ENCODE measurements at regions of chr19 and their contacts with region 1.

Region 1: DNA sequence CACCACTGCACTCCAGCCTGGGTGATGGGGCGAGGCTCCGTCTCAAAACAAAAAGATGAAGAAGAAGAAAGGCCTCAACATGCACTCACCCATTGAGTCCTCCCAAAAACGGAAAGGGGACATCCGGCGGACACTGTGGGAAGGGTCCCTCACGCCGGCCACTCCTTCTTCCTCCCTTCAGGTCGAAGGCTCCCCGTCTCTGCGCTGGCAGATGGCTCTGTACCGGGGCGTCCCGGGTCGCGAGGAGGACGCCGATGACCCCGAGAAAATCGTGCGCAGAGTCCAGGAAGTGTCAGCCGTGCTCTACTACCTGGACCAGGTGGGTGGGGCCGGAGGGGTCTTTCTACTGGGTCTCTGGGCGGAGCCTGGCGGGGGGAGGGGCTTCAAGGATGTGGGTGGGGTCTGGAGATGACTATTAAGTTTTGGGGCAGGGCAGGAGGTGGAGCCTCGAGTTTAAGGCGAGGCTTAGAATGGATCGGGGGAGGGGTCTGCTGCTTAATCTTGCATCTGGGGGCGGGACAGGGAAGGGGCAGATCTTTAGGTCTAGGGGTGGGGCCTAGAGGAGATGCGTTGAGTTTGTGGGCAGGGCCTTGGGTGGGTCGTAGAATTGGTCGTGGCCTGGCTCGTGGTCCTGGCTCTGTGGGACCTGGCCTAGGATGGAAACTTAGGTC is 90.2 kb downstream of the MAP4K1 start:
- DNase-seq: peak in 1 of 6 donors; percentile 46
- ATAC-seq: no peak
- H3K4me3 ChIP-seq: no peak overlapping the region
- H3K27ac ChIP-seq: no peak overlapping the region
- H3K4me1 ChIP-seq: no peaks in the 10 kb centered on the region
- H3K27me3 ChIP-seq: no peaks in the 10 kb centered on the region
- CTCF ChIP-seq: no peak

Region 2: DNA sequence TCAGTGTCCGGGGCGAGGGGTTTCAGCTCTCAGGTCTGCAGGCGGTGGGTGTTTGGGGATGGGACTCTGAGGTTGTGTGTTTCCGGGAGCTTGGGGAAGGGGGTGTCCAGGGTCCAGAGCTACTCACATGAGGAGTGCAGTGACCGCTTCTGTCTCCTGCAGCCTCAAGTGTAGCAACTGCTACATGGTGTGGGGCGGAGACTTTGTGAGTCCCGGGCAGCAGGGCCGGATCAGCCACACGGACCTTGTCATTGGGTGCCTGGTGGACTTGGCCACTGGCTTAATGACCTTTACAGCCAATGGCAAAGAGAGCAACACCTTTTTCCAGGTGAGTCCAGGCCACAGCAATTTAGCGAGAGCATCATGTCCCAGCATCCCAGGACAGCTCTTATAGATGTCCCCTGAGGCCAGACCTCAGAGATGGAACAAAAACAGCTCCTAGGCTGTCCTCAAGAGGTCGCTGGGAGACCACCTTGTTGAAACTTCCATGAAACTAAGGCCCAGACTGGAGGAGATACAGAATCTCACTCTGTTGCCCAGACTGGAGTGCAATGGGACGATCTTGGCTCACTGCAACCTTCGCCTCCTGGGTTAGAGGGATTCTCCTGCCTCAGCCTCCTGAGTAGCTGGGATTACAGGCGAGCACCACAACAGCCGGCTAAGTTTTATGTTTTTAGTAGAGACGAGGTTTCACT is 49.2 kb before region 1 on chr19:
- intact Hi-C with region 1: loop called in 1 of 3 experiments (anchors 2 kb)
- DNase-seq: no peak
- ATAC-seq: no peak
- H3K4me3 ChIP-seq: no peak overlapping the region
- H3K27ac ChIP-seq: no peak overlapping the region
- H3K4me1 ChIP-seq: no peaks in the 10 kb centered on the region
- H3K27me3 ChIP-seq: no peaks in the 10 kb centered on the region
- CTCF ChIP-seq: no peak

Region 3: GRCh38 chr19:38634757-38635482 is 107.3 kb after region 1 on chr19:
- intact Hi-C with region 1: loop called in 1 of 3 experiments (anchors 10 kb)
- DNase-seq: peak in 5 of 6 donors; percentile 56 to 92 (median 82)
- ATAC-seq: peak; percentile 72 to 89 (median 80)
- H3K4me3 ChIP-seq: no peak overlapping the region
- H3K27ac ChIP-seq: no peak overlapping the region
- H3K4me1 ChIP-seq: no peaks in the 10 kb centered on the region
- H3K27me3 ChIP-seq: no peaks in the 10 kb centered on the region
- CTCF ChIP-seq: peak; percentile 92 to 95 (median 95)

Measured in pancreas (tissue), 10 donors.